Natural killer cell (primary cell): ENCODE measurements at regions of chr16 and their contacts with region 1.

Region 1: GRCh38 chr16:75764154-75764768 is 38.0 kb upstream of the CPHXL start:
- DNase-seq: peak in 1 of 2 donors; percentile 86
- ATAC-seq: peak; percentile 83 to 93 (median 91)
- H3K4me3 ChIP-seq: no peak overlapping the region
- H3K4me3 Mint-ChIP-seq: no peak overlapping the region
- H3K27ac ChIP-seq: no peak overlapping the region
- H3K27ac Mint-ChIP-seq: no peak overlapping the region
- H3K4me1 ChIP-seq: no peaks in the 10 kb centered on the region
- H3K4me1 Mint-ChIP-seq: no peaks in the 10 kb centered on the region
- H3K27me3 ChIP-seq: no peaks in the 10 kb centered on the region
- H3K27me3 Mint-ChIP-seq: peaks cover 3 to 29% of the 10 kb centered on the region in 2 donors
- CTCF ChIP-seq: peak; percentile 76

Region 2: GRCh38 chr16:75471723-75472633 is 292.3 kb before region 1 on chr16:
- intact Hi-C with region 1: loop called (anchors 1 kb)
- DNase-seq: peak in 1 of 2 donors; percentile 73
- ATAC-seq: peak; percentile 75 to 85 (median 79)
- H3K4me3 ChIP-seq: no peak overlapping the region
- H3K4me3 Mint-ChIP-seq: no peak overlapping the region
- H3K27ac ChIP-seq: no peak overlapping the region
- H3K27ac Mint-ChIP-seq: peak overlapping the region in 1 of 2 donors; percentile 5
- H3K4me1 ChIP-seq: no peaks in the 10 kb centered on the region
- H3K4me1 Mint-ChIP-seq: peaks cover 0 to 5% of the 10 kb centered on the region in 2 donors
- H3K27me3 ChIP-seq: no peaks in the 10 kb centered on the region
- H3K27me3 Mint-ChIP-seq: no peaks in the 10 kb centered on the region
- CTCF ChIP-seq: peak; percentile 51

Region 3: GRCh38 chr16:75703306-75703705 is 61.0 kb before region 1 on chr16:
- intact Hi-C with region 1: no loop called
- DNase-seq: no peak
- ATAC-seq: no peak
- H3K4me3 ChIP-seq: no peak overlapping the region
- H3K4me3 Mint-ChIP-seq: no peak overlapping the region
- H3K27ac ChIP-seq: no peak overlapping the region
- H3K27ac Mint-ChIP-seq: no peak overlapping the region
- H3K4me1 ChIP-seq: no peaks in the 10 kb centered on the region
- H3K4me1 Mint-ChIP-seq: no peaks in the 10 kb centered on the region
- H3K27me3 ChIP-seq: no peaks in the 10 kb centered on the region
- H3K27me3 Mint-ChIP-seq: no peaks in the 10 kb centered on the region
- CTCF ChIP-seq: no peak